ENCODE measurements at regions of chr4 and their contacts with region 1.

Region 1: GRCh38 chr4:22500831-22501719 is 14.8 kb downstream of the ADGRA3 start:
- DNase-seq: no peak
- H3K4me3 Mint-ChIP-seq: peak overlapping the region; percentile 56
- H3K27ac Mint-ChIP-seq: no peak overlapping the region
- H3K4me1 Mint-ChIP-seq: peaks cover 26% of the 10 kb centered on the region
- H3K27me3 Mint-ChIP-seq: no peaks in the 10 kb centered on the region

Region 2: DNA sequence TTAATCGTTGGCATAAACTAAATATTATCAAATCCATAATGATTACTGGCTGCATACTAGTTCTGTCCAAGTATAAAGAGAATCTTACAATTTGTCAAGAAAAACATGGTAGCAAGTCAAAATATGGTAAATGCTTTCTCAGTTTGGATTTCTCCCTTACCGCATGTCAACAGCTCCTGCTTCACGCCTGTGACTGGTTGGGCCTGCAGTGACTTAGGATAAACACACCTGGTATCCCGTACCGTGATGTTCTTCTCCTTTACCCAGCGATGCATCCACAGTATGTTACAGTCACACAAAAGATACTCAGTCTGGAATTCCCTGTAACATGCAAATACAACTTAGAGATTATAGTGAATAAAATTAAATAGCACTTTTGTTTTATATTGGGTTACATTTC is 56.3 kb before region 1 on chr4:
- intact Hi-C with region 1: loop called (anchors 1 kb)
- DNase-seq: no peak
- H3K4me3 Mint-ChIP-seq: peak overlapping the region; percentile 84
- H3K27ac Mint-ChIP-seq: peak overlapping the region; percentile 98
- H3K4me1 Mint-ChIP-seq: peaks cover 24% of the 10 kb centered on the region
- H3K27me3 Mint-ChIP-seq: no peaks in the 10 kb centered on the region

Region 3: GRCh38 chr4:22483551-22483981 is 17.5 kb before region 1 on chr4:
- intact Hi-C with region 1: loop called (anchors 2 kb)
- DNase-seq: no peak
- H3K4me3 Mint-ChIP-seq: no peak overlapping the region
- H3K27ac Mint-ChIP-seq: no peak overlapping the region
- H3K4me1 Mint-ChIP-seq: peaks cover 20% of the 10 kb centered on the region
- H3K27me3 Mint-ChIP-seq: no peaks in the 10 kb centered on the region

Region 4: GRCh38 chr4:22515145-22515887 is 14.2 kb after region 1 on chr4:
- intact Hi-C with region 1: loop called (anchors 1 kb)
- DNase-seq: peak; percentile 83
- H3K4me3 Mint-ChIP-seq: peak overlapping the region; percentile 100
- H3K27ac Mint-ChIP-seq: peak overlapping the region; percentile 96
- H3K4me1 Mint-ChIP-seq: peaks cover 21% of the 10 kb centered on the region
- H3K27me3 Mint-ChIP-seq: peaks cover 7% of the 10 kb centered on the region

Region 5: GRCh38 chr4:22573198-22573597 is 72.1 kb after region 1 on chr4:
- intact Hi-C with region 1: no loop called
- DNase-seq: no peak
- H3K4me3 Mint-ChIP-seq: no peak overlapping the region
- H3K27ac Mint-ChIP-seq: no peak overlapping the region
- H3K4me1 Mint-ChIP-seq: no peaks in the 10 kb centered on the region
- H3K27me3 Mint-ChIP-seq: no peaks in the 10 kb centered on the region

Region 6: GRCh38 chr4:22607382-22607781 is 106.3 kb after region 1 on chr4:
- intact Hi-C with region 1: loop called (anchors 10 kb)
- DNase-seq: peak; percentile 80
- H3K4me3 Mint-ChIP-seq: no peak overlapping the region
- H3K27ac Mint-ChIP-seq: no peak overlapping the region
- H3K4me1 Mint-ChIP-seq: peaks cover 8% of the 10 kb centered on the region
- H3K27me3 Mint-ChIP-seq: no peaks in the 10 kb centered on the region

Region 7: GRCh38 chr4:22678940-22679854 is 178.1 kb after region 1 on chr4:
- intact Hi-C with region 1: loop called (anchors 10 kb)
- DNase-seq: no peak
- H3K4me3 Mint-ChIP-seq: no peak overlapping the region
- H3K27ac Mint-ChIP-seq: no peak overlapping the region
- H3K4me1 Mint-ChIP-seq: peaks cover 7% of the 10 kb centered on the region
- H3K27me3 Mint-ChIP-seq: no peaks in the 10 kb centered on the region

Region 8: GRCh38 chr4:22692736-22693135 is 191.7 kb after region 1 on chr4 and contains the start of gene GBA3:
- intact Hi-C with region 1: no loop called
- DNase-seq: no peak
- H3K4me3 Mint-ChIP-seq: no peak within 1 kb of the TSS
- H3K27ac Mint-ChIP-seq: no peak within 1 kb of the TSS
- H3K4me1 Mint-ChIP-seq: peaks cover 3% of the 10 kb centered on the region
- H3K27me3 Mint-ChIP-seq: peaks cover 9% of the 10 kb centered on the region
- total RNA-seq, gene GBA3: not detected in 2 replicates

Measured in activated CD4-positive, alpha-beta T cell treated with anti-CD3 and anti-CD28 coated beads, Interleukin-2, amount 10 ng/mL, durations not matched to agents 24 days and 14 days (primary cell).